HEK293T (cell line): ENCODE measurements at regions of chr2 and their contacts with region 1.

Region 1: DNA sequence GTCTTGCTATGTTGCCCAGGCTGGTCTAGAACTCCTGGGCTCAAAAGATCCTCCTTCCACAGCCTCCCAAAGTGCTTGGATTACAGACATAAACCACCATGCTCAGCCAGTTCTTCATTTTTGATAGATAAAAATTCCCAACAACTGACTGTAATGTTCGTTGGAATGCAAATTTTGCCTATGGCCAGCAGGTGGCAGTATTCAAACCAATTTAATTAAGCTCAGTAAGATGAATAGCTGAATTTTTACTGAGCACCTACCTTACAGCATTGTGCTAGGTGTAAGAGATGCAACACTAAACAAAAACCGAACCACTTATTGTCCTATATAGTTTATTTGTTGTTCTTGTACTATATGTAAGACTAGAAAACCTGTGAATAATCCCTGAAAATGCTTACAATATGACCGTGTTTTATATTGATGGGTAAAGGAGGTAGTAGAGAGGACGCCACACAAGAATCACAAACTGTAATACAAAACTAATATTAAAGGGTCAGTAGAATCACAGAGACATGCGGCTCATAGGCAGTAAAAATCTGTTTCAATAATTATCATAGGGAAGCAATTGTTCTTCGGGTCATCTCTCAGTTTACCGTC is 8.2 kb upstream of the TMEM182 start:
- DNase-seq: peak; percentile 32

Region 2: DNA sequence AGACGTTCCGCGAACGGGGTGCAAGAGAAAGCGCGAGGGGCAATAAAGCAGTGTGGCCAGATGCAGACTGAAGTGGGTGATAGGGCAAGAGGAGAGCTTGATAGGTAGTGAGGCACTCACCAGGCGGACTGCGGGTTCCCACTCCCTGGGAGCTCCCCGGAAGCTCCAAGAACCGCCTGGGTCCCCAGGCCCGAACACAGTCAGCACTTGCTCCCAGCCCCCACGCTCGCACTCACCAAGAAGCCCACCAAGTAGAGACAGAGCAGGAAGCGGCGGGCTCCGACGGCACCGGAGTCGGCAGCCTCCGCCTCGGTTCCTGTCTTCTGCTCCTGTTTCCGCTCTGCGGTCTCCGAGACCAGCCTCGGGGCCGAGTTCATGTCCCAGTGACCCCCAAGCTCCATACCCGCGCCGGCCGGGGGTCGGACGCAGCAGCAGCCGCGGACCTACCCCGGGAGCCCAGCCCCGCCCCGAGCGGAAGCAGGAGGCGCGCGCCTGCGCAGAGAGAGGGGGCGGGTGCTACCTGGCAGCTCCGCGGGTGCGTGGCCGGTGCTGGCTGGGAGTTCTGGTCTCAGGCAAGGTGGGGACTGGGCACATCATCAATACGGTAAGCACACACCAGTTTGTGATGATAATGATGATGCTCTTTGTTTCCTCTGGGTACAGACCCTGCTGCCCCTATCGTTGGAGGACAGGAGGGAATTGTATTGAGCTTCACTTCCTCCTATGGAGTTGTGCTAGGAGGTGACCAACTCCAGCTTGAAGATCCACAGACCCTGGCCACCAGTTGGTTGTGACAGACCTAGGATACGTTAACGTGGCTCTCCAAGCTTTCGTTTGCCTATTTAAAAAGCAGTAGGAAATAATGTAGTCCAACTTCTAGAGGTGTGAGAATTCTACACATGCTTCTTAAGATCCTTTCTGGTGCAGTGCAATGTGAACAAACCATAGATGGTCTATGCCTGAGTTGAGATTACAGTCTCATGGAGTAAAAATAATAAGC is 17.0 kb before region 1 on chr2:
- CTCF ChIA-PET with region 1: interaction called, 10 read pairs
- POLR2A ChIA-PET with region 1: interaction called, 9 read pairs
- DNase-seq: peak; percentile 91

Region 3: GRCh38 chr2:102782933-102783332 is 29.3 kb after region 1 on chr2:
- CTCF ChIA-PET with region 1: interaction called, 10 read pairs
- POLR2A ChIA-PET with region 1: no interaction called
- DNase-seq: no peak

Region 4: GRCh38 chr2:102806250-102806837 is 52.7 kb after region 1 on chr2:
- CTCF ChIA-PET with region 1: interaction called, 27 read pairs
- POLR2A ChIA-PET with region 1: no interaction called
- DNase-seq: peak; percentile 77